HEK293 (cell line): ENCODE measurements at regions of chr14 and their contacts with region 1.

Region 1: DNA sequence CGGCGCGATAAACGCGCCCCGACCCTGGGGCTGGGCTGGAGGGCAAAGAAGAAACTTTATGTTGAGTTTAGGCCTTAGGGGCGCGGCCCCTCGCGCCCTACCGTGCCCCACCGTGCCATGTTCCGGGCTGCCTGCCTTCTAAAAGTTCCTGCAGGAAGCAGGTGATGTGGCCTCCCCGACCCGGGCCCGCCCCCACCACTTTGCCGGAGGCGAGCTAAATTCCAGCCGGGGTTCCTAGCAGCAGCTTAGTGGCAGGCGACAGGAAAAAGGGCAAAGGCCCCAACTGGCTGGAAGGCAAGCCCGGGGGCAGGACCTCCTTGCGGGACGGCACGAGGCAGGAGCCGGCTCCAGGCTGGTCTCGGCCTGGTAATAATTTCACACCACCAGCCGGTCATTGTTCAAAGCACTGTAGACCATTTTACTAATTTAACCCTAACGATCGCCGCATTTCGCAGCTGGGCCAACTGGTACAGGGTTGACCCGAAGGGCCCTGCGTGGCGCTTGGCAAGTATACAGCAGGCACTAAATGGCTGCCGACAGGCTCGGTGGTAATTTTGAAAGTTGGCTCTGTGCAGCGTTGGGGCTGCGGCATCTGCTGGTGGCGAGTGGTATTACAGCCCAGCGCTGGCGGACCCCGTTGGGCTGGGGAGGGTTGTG is 895 bp upstream of the CCDC88C start:
- H3K4me3 ChIP-seq: peak overlapping the region; percentile 57
- H3K27ac ChIP-seq: peak overlapping the region; percentile 66; the same call in 1 of the 2 replicates
- H3K4me1 ChIP-seq: peaks cover 3% of the 10 kb centered on the region; the same call in 1 of the 2 replicates
- CTCF ChIP-seq: peak; percentile 91

Region 2: DNA sequence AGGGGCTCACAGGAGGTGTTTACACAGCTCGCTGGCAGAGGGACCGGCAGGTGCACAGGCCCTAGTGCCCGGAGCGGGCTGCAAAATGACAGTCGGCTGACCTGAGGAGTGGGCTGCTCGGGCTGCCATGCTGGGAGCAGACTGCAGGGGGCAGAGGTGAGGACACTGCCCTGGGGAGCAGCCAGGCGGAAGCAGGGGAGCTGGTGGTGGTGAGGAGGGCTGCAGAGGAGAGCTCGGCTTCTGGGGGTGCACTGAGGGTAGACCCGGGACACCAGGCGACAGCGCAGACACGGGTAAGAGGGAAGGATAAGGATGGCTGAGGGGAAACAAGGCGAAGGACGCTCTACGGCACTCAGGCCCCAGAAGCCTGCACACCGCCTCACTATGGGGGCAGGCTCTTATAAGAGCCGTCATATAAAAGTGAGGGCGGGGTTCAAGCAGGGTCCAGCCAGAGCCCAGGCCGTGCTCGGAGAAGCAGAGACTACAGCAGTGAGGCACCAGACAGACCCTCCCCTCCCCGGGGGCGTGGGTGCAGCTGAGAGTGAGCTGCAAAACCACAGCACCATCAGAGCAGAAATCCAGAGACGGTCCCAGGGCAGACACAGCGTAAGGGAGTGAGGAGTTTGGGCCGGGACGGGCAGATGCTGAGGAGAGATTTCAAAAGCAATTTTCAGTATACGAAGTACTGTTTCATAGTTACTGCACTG is 63.4 kb before region 1 on chr14:
- CTCF ChIA-PET with region 1: interaction called, 14 read pairs
- POLR2A ChIA-PET with region 1: no interaction called
- H3K4me3 ChIP-seq: no peak overlapping the region
- H3K27ac ChIP-seq: no peak overlapping the region
- H3K4me1 ChIP-seq: no peaks in the 10 kb centered on the region
- CTCF ChIP-seq: peak; percentile 45; the same call in 1 of the 2 replicates